Right cardiac atrium (tissue), 5 donors: ENCODE measurements at regions of chr9 and their contacts with region 1.

Region 1: DNA sequence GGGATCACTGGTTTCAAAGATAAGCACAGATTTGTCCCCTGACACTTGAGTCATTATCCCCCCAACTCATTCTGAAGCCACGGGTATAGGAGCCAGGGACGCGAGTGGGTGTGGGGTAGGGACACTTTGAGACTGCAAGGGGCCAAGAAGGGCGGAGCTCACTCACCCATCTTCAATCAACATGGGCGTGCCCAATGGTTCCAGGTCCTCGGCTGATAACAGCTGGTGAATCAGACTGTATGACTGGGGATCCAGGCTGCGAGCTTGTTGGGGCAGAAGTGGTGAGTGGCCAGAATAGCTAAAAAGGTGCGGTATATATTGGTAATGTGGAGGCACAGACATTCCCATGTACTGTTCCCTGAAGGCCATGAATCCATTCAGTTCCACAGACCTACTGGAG is 30.7 kb upstream of the NR5A1 start:
- DNase-seq: no peak
- ATAC-seq: no peak
- H3K4me3 ChIP-seq: no peak overlapping the region
- H3K27ac ChIP-seq: no peak overlapping the region
- H3K4me1 ChIP-seq: no peaks in the 10 kb centered on the region
- H3K27me3 ChIP-seq: no peaks in the 10 kb centered on the region

Region 2: GRCh38 chr9:124133727-124134126 is 404.2 kb before region 1 on chr9:
- intact Hi-C with region 1: loop called in 3 of 4 experiments (anchors 5 to 10 kb)
- DNase-seq: peak in 2 of 3 donors; percentile 52 to 64
- ATAC-seq: peak; percentile 46 to 67
- H3K4me3 ChIP-seq: no peak overlapping the region
- H3K27ac ChIP-seq: no peak overlapping the region
- H3K4me1 ChIP-seq: peaks cover 3% of the 10 kb centered on the region
- H3K27me3 ChIP-seq: no peaks in the 10 kb centered on the region

Region 3: GRCh38 chr9:124415102-124415851 is 122.6 kb before region 1 on chr9 and contains the start of gene PSMB7:
- intact Hi-C with region 1: loop called (anchors 5 kb)
- DNase-seq: peak; percentile 95 to 98 (median 98)
- ATAC-seq: peak; percentile 94 to 97
- H3K4me3 ChIP-seq: peak within 1 kb of the TSS; percentile 90
- H3K27ac ChIP-seq: peak within 1 kb of the TSS; percentile 47
- H3K4me1 ChIP-seq: peaks cover 2% of the 10 kb centered on the region
- H3K27me3 ChIP-seq: no peaks in the 10 kb centered on the region
- total RNA-seq, gene PSMB7: 130 to 152 (median 137) TPM

Region 4: GRCh38 chr9:124420991-124421543 is 116.9 kb before region 1 on chr9:
- intact Hi-C with region 1: loop called (anchors 5 kb)
- DNase-seq: no peak
- ATAC-seq: no peak
- H3K4me3 ChIP-seq: no peak overlapping the region
- H3K27ac ChIP-seq: no peak overlapping the region
- H3K4me1 ChIP-seq: no peaks in the 10 kb centered on the region
- H3K27me3 ChIP-seq: no peaks in the 10 kb centered on the region

Region 5: GRCh38 chr9:124480621-124480981 is 57.3 kb before region 1 on chr9:
- intact Hi-C with region 1: no loop called
- DNase-seq: peak in 1 of 3 donors; percentile 38
- ATAC-seq: no peak
- H3K4me3 ChIP-seq: no peak overlapping the region
- H3K27ac ChIP-seq: no peak overlapping the region
- H3K4me1 ChIP-seq: no peaks in the 10 kb centered on the region
- H3K27me3 ChIP-seq: no peaks in the 10 kb centered on the region